CD4-positive, alpha-beta T cell (primary cell): ENCODE measurements at regions of chr1 and their contacts with region 1.

Region 1: DNA sequence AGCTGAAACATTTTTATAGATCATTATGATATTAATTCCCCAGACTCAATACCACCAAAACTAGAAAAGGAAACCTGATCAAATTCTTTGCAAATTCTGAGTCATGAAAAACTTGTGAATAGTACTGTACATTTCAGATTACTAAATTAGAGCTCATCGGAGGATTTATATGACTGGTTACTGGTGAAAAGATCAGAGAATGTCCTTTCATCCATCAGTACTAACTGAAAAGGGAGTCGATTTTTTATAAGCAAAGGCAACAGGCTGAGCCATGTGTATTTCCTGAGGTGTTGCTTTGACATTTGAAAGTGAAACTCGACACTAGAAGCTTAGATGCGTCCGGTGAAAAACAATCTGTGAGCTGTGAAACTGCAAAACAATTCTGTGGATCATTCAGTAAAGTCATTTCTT is 155.7 kb downstream of the TNFSF18 start:
- DNase-seq: peak in 6 of 14 experiments; percentile 19 to 79 (median 48)
- ATAC-seq: peak; percentile 74
- H3K4me3 ChIP-seq: peak overlapping the region; percentile 39
- H3K4me3 Mint-ChIP-seq: peak overlapping the region; percentile 76
- H3K27ac ChIP-seq: peak overlapping the region; percentile 11 to 59
- H3K27ac Mint-ChIP-seq: peak overlapping the region; percentile 84
- H3K4me1 ChIP-seq: peaks cover 6% of the 10 kb centered on the region
- H3K4me1 Mint-ChIP-seq: peaks cover 39% of the 10 kb centered on the region
- H3K27me3 ChIP-seq: no peaks in the 10 kb centered on the region
- H3K27me3 Mint-ChIP-seq: no peaks in the 10 kb centered on the region
- CTCF ChIP-seq: no peak

Region 2: GRCh38 chr1:172826096-172826743 is 68.8 kb before region 1 on chr1:
- CTCF ChIA-PET with region 1: interaction called, 3 read pairs
- POLR2A ChIA-PET with region 1: interaction called, 10 read pairs
- intact Hi-C with region 1: no loop called
- DNase-seq: peak in 3 of 14 experiments; percentile 29 to 35 (median 34)
- ATAC-seq: no peak
- H3K4me3 ChIP-seq: no peak overlapping the region
- H3K4me3 Mint-ChIP-seq: no peak overlapping the region
- H3K27ac ChIP-seq: no peak overlapping the region
- H3K27ac Mint-ChIP-seq: no peak overlapping the region
- H3K4me1 ChIP-seq: no peaks in the 10 kb centered on the region
- H3K4me1 Mint-ChIP-seq: no peaks in the 10 kb centered on the region
- H3K27me3 ChIP-seq: no peaks in the 10 kb centered on the region
- H3K27me3 Mint-ChIP-seq: no peaks in the 10 kb centered on the region
- CTCF ChIP-seq: peak; percentile 63

Region 3: DNA sequence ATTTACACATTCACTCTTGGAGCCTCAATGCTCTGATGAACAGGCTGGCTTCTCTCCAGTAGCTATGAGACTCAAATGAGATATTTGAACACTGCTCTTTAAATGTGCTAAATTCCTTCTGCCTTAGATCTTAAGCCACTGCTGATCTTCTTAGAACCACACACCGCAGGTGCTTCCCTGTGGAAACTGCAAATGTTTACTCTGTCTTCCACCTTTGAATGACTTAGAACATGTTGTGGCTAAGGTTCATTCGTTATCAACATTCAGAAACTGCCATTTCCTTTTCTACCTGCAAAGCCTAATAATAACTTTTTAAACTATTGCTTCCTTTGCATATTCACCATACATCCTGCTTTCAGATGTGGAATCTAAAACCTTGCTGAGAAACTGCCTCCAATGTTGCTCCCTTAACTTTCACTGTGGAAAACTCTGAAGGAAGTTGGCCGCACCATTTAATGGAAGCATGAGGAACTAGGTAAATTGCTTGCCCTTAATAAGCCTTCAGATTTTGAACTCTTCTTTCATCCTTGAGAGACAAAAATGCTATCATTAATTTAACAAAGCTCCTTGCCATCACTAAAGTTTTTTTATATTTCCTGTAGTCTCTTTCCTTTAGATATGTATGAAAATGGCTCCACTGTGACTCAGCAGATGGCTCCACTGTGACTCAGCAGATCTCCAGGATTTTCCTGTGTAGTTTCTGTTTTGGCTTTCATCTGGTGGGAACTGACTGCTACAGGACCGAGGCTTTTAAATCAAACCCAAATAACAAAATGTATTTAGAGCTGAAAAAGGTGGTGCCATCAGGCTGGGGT is 11.9 kb after region 1 on chr1:
- CTCF ChIA-PET with region 1: interaction called, 3 read pairs
- POLR2A ChIA-PET with region 1: interaction called, 23 read pairs
- intact Hi-C with region 1: no loop called
- DNase-seq: peak in 8 of 14 experiments; percentile 4 to 68 (median 24)
- ATAC-seq: peak; percentile 68
- H3K4me3 ChIP-seq: no peak overlapping the region
- H3K4me3 Mint-ChIP-seq: peak overlapping the region; percentile 3
- H3K27ac ChIP-seq: peak overlapping the region in 1 of 2 donors; percentile 32
- H3K27ac Mint-ChIP-seq: peak overlapping the region; percentile 35
- H3K4me1 ChIP-seq: peaks cover 9% of the 10 kb centered on the region
- H3K4me1 Mint-ChIP-seq: peaks cover 40% of the 10 kb centered on the region
- H3K27me3 ChIP-seq: no peaks in the 10 kb centered on the region
- H3K27me3 Mint-ChIP-seq: no peaks in the 10 kb centered on the region
- CTCF ChIP-seq: no peak

Region 4: DNA sequence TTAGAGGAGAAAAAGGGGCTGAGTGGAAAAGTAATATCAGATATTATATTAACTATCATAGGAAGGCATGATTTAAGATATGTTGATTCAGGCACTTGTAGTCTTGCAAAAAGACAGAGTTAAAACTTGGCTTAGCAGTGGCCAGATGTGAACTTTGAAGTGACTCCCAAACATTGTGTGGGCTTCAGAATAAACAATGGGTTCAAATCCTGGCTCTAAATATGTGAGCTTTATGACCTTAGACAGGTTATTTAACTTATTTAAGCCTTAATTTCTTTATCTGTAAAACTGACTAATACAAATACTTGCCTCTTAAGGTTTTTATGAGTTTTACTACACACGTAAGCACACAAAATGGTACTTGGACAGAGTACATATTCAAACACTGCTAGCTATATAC is 69.8 kb after region 1 on chr1:
- CTCF ChIA-PET with region 1: no interaction called
- POLR2A ChIA-PET with region 1: no interaction called
- intact Hi-C with region 1: no loop called
- DNase-seq: no peak
- ATAC-seq: no peak
- H3K4me3 ChIP-seq: no peak overlapping the region
- H3K4me3 Mint-ChIP-seq: no peak overlapping the region
- H3K27ac ChIP-seq: no peak overlapping the region
- H3K27ac Mint-ChIP-seq: no peak overlapping the region
- H3K4me1 ChIP-seq: no peaks in the 10 kb centered on the region
- H3K4me1 Mint-ChIP-seq: no peaks in the 10 kb centered on the region
- H3K27me3 ChIP-seq: no peaks in the 10 kb centered on the region
- H3K27me3 Mint-ChIP-seq: no peaks in the 10 kb centered on the region
- CTCF ChIP-seq: no peak